ENCODE measurements at regions of chr2 and their contacts with region 1.

Region 1: GRCh38 chr2:109173311-109174171 is 44.5 kb downstream of the SH3RF3 start:
- DNase-seq: peak; percentile 82
- H3K4me3 ChIP-seq: no peak overlapping the region
- H3K27ac ChIP-seq: peak overlapping the region; percentile 90
- H3K4me1 ChIP-seq: peaks cover 55% of the 10 kb centered on the region
- H3K27me3 ChIP-seq: no peaks in the 10 kb centered on the region
- CTCF ChIP-seq: no peak
- POLR2A ChIP-seq: peak; percentile 48

Region 2: DNA sequence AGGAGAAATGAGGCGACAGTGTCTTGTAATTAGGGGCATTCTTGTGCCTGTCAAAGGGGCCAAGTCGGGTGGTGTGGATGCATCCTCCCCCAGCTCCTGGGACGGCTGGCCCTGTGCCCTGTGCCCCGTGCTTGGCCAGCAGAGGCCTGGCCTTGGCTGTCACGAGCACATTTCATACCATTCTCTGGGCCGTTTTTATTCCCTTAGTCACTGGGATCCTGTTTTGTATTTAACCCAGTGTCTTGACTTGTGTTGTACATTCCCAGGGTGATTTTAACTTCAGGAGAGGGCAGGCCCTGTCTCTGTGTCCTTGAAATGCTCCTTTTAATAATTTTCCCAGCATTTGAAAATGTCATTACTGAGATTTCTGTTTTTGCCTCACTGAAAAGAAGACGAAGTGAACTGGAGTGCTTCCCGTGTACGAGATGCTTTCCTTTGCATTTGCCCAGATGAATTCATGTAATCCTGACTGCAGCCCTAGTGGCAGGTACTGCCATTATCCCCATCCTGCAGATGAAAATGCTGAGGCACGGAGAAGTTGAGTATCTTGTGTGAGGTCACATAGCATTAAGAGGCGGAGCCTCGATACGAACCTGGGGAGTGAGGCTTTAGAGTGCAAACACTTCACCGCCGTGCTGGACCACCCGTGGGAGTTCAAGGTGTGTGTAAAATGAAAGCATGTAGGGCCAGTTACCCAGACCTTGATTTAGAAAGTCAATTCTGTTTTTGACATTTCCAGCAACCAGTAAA is 12.5 kb after region 1 on chr2:
- CTCF ChIA-PET with region 1: interaction called, 11 read pairs
- POLR2A ChIA-PET with region 1: no interaction called
- dilution Hi-C with region 1: no loop called
- intact Hi-C with region 1: loop called (anchors 1 kb)
- DNase-seq: peak; percentile 70
- H3K4me3 ChIP-seq: no peak overlapping the region
- H3K27ac ChIP-seq: peak overlapping the region; percentile 3
- H3K4me1 ChIP-seq: peaks cover 11% of the 10 kb centered on the region
- H3K27me3 ChIP-seq: no peaks in the 10 kb centered on the region
- CTCF ChIP-seq: no peak
- POLR2A ChIP-seq: no peak

Region 3: GRCh38 chr2:109218087-109218791 is 44.7 kb after region 1 on chr2:
- CTCF ChIA-PET with region 1: no interaction called
- POLR2A ChIA-PET with region 1: no interaction called
- dilution Hi-C with region 1: no loop called
- intact Hi-C with region 1: no loop called
- DNase-seq: no peak
- H3K4me3 ChIP-seq: no peak overlapping the region
- H3K27ac ChIP-seq: no peak overlapping the region
- H3K4me1 ChIP-seq: peaks cover 7% of the 10 kb centered on the region
- H3K27me3 ChIP-seq: no peaks in the 10 kb centered on the region
- CTCF ChIP-seq: no peak
- POLR2A ChIP-seq: no peak

Region 4: DNA sequence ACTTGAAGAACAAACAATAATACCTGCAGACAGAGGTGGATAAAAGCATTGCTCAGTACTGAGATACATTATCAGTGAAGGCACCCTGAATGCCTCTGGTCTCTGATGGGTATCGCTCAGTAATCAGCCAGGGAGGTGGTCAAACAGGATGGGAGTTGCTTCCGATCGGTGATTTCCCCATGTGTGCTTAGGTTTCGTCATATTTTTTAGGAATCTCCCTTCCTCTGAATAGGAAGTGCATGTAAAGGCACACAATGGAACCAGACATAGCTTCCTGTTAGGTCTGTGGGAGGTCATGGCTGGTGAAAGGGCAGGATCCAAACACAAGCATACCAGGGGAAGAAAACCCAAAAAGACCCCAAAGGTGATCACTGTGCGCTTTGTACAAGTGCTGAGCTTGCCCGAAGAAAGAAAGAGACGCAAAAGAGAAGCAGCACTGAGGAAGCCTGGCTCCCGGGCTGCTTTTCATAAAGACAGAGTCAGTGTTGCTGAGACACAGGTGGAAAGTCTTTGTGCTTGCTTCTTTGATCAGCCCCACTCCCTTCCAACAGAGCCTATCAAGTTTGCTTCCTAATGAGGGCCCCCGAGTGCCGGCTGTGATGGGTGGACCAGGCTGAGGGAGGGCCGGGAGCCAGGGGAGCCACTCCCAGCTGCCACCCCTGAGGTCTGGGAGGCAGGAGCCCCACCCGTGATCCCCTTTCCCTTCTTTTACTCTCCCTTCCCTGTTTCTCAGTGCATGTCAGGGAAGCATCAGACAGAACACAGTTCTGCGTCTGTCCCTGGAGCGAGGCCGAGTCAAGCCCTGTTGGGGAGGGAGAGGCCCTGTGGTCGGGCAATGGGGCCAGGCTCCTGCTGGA is 93.7 kb after region 1 on chr2:
- CTCF ChIA-PET with region 1: interaction called, 4 read pairs
- POLR2A ChIA-PET with region 1: no interaction called
- dilution Hi-C with region 1: no loop called
- intact Hi-C with region 1: loop called (anchors 2 kb)
- DNase-seq: peak; percentile 87
- H3K4me3 ChIP-seq: no peak overlapping the region
- H3K27ac ChIP-seq: peak overlapping the region; percentile 95
- H3K4me1 ChIP-seq: peaks cover 39% of the 10 kb centered on the region
- H3K27me3 ChIP-seq: no peaks in the 10 kb centered on the region
- CTCF ChIP-seq: no peak
- POLR2A ChIP-seq: peak; percentile 45